ENCODE measurements at regions of chr19 and their contacts with region 1.

Region 1: GRCh38 chr19:4867534-4868285 is at the start of gene PLIN3:
- H3K4me3 ChIP-seq: peak within 1 kb of the TSS; percentile 63
- H3K27ac ChIP-seq: no peak within 1 kb of the TSS
- H3K4me1 ChIP-seq: peaks cover 3% of the 10 kb centered on the region; the same call in 1 of the 2 replicates
- CTCF ChIP-seq: no peak

Region 2: GRCh38 chr19:4851551-4852290 is 16.0 kb before region 1 on chr19:
- CTCF ChIA-PET with region 1: interaction called, 31 read pairs
- POLR2A ChIA-PET with region 1: interaction called, 4 read pairs
- H3K4me3 ChIP-seq: no peak overlapping the region
- H3K27ac ChIP-seq: no peak overlapping the region
- H3K4me1 ChIP-seq: no peaks in the 10 kb centered on the region
- CTCF ChIP-seq: peak; percentile 92

Region 3: DNA sequence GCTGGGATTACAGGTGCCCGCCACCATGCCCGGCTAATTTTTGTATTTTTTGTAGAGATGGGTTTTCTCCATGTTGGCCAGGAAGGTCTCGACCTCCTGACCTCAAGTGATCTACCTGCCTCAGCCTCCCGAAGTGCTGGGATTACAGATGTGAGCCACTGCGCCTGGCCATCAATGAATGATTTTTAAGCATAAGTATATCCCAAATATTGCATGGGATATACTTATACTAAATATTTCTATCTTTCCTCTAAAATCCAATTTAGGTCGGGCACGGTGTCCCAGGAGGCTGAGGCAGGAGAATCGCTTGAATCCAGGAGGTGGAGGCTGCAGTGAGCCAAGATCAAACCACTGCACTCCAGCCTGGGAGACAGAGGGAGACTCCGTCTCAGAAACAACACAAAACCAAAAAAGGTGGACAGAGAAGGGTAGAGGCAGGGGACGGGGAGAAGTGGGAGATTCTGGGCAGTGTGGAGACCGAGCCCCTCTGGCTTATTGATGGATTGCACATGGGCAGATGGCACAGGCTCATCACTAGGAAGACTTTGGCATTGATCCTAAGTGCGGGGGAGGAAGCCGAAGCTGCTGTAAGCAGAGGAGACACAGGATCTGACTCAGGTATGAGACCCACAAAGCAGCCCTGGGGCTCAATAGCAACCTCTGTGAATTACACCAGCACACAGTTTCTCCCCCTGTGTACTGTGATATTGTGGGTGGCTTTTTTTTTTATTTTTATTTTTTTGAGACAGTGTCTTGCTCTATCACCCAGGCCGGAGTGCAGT is 21.5 kb after region 1 on chr19:
- CTCF ChIA-PET with region 1: interaction called, 9 read pairs
- POLR2A ChIA-PET with region 1: interaction called, 12 read pairs
- H3K4me3 ChIP-seq: no peak overlapping the region
- H3K27ac ChIP-seq: no peak overlapping the region
- H3K4me1 ChIP-seq: no peaks in the 10 kb centered on the region
- CTCF ChIP-seq: no peak

Region 4: DNA sequence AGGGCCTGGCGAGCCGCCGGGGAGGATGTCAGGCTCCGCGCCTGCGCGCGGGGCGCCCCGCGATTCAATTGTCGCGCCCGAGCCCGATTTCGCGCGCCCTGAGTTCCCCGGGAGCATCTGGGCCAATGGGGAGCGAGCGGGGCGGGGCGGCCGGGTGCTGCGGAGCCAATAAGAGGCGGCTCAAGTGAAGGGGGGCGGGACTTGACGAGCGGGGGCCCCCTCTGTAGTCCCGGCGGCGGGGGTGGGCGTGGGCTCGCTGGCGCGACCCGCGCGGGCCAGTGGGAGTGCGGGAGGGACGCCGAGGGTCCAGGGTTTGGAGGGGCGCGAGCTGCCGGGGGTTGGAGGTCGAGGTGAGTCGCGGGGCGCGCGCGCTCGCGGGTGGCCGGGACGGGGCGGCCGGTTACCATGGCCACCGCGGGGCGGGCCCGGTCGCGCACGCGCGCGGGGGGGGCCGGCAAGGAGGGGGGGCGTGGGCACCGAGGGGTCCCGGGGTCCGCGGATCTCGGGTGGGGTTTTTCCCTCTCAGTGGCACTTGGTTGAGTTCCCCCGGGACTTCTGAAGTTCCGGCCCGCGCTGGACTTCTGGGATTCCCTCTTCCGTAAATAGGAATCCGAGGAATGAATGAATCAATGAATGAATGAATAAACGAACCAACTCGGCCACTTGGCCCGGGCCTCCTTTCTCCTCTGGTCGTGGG is 42.3 kb after region 1 on chr19:
- CTCF ChIA-PET with region 1: interaction called, 54 read pairs
- POLR2A ChIA-PET with region 1: interaction called, 10 read pairs
- H3K4me3 ChIP-seq: peak overlapping the region; percentile 77
- H3K27ac ChIP-seq: peak overlapping the region; percentile 92
- H3K4me1 ChIP-seq: peaks cover 13% of the 10 kb centered on the region
- CTCF ChIP-seq: no peak

Measured in HEK293 (cell line).